ENCODE measurements at regions of chr19 and their contacts with region 1.

Region 1: DNA sequence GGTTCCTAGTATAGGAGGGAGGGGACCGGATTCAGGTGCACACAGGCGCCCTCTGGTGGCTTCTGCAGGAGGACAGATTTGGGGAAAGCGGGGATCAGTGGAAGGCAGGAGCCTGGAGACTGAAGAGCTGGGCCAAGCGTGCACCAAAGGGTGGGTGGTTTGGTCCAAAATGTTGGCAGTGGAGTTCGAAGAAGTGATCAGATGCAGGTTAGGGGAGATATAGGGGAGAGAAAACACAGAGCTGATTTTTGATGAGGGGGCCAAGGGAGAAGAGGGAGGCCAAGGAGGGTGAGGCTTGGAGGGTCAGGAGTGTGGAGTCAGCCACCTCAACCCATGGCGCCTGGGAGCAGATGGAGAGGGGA is 6.8 kb upstream of the CARM1 start:
- DNase-seq: no peak
- H3K4me3 ChIP-seq: no peak overlapping the region
- H3K27me3 ChIP-seq: no peaks in the 10 kb centered on the region
- CTCF ChIP-seq: peak; percentile 96

Region 2: DNA sequence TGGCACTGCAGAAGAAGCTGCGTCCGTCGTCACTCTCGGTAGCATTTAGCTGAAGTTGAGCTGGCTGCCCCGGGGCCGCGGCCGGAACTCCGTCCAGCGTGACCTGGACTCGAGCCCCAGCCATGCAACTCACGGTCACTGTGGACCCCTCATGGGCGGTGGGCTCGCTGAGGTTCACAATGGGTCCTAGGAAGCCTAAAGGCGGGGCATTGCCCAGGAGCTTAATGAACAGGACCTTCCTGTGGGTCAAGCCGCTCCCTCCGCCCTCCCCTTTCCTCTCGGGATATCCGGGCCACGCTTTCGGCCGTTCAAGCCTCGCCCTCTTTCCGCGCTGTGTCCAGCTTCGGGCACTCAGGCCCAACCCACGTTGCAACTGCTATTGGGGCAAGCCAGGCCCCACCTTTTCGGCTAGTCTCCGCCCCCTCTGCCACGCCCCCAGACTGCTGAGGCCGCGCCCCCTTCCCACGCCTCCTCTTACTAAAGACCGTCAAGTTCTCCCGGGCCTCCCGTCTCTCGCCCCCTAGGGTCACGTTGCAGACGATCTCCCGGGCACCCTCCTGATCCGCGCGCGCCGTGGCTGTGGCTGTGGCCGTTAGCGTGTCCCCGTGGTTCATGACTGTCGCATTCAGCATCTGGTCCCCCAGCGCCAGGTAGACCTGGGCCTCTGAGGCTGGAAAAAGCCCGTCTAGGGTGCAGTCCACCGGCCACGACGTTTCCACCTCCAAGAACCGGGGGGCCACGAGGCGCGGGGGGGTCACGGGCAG is 529.7 kb before region 1 on chr19:
- CTCF ChIA-PET with region 1: no interaction called
- POLR2A ChIA-PET with region 1: no interaction called
- DNase-seq: peak; percentile 81
- H3K4me3 ChIP-seq: peak overlapping the region; percentile 97
- H3K27me3 ChIP-seq: no peaks in the 10 kb centered on the region
- CTCF ChIP-seq: peak; percentile 40

Region 3: DNA sequence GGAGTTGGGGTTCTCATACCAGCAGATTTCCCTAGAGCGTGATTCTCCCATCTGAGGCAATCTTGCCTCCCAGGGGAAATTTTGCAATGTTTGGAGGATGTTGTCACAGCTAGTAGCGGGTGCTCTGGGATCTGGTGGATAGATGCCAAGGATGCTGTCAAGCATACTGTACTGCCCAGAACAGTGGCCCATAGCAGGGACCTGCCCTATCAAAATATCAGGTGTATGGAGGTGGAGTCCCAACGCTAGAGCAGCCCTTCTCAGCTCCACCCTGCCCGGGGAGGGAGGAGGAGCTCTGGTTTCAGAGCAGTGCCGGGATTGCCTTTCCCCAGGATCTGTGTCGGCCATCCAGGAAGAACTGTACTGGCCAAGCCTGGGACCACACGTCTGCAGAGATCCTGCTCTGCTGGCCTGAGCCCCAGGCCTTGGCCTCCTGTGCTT is 174.2 kb before region 1 on chr19:
- CTCF ChIA-PET with region 1: no interaction called
- POLR2A ChIA-PET with region 1: no interaction called
- DNase-seq: no peak
- H3K4me3 ChIP-seq: no peak overlapping the region
- H3K27me3 ChIP-seq: no peaks in the 10 kb centered on the region
- CTCF ChIP-seq: no peak

Region 4: GRCh38 chr19:10701955-10702525 is 162.5 kb before region 1 on chr19:
- CTCF ChIA-PET with region 1: interaction called, 14 read pairs
- POLR2A ChIA-PET with region 1: no interaction called
- DNase-seq: no peak
- H3K4me3 ChIP-seq: peak overlapping the region; percentile 96
- H3K27me3 ChIP-seq: no peaks in the 10 kb centered on the region
- CTCF ChIP-seq: no peak

Region 5: DNA sequence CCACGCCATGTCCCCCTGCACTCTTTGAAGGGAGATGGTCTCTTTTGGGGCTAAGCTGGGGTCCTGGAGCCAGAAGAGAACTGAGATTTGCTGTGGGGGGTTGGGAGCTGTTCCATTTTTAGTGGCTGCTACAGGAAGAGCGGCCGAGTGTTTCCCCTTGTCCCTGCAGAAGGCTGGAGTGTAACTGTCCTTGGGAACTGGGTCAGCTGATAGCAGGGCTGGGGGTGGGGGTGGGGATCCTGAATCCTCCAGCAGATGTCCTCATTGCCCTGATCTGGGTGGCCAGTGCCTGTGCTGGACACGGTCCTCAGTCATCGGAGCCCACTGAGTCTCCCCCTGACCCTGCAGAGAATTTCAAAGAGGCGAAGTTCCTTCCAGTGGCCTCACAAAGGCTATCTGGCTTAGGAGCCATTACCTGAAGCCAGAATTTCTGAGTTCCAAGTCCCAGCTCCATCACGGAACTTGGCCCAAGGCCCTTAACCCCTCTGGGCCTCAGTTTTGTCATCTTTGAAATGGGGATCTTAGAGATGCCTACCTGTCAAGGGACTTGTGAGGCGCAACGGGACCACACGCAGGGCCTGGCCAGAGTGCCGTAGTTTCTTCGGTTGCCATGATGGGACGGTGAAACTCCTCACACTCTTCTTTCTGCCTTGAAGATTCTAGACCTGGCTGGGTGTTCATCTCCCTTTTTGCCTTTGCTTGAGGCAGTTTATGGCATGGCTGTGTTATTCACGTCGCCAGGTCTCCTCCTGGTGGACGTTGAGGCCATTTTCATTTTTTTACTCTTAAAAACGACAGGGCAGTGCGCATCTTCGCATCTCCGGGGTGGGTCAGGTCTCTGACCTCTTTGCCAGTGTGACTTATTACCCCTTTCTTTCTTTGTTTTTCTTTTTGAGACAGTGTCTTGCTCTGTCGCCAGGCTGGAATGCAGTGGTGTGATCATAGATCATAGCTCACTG is 94.7 kb before region 1 on chr19:
- CTCF ChIA-PET with region 1: interaction called, 11 read pairs
- POLR2A ChIA-PET with region 1: no interaction called
- DNase-seq: no peak
- H3K4me3 ChIP-seq: no peak overlapping the region
- H3K27me3 ChIP-seq: no peaks in the 10 kb centered on the region
- CTCF ChIP-seq: peak; percentile 32

Region 6: GRCh38 chr19:10846500-10847202 is 17.9 kb before region 1 on chr19:
- CTCF ChIA-PET with region 1: interaction called, 26 read pairs
- POLR2A ChIA-PET with region 1: no interaction called
- DNase-seq: no peak
- H3K4me3 ChIP-seq: no peak overlapping the region
- H3K27me3 ChIP-seq: peaks cover 8% of the 10 kb centered on the region; the same call in 1 of the 2 replicates
- CTCF ChIP-seq: no peak

Region 7: DNA sequence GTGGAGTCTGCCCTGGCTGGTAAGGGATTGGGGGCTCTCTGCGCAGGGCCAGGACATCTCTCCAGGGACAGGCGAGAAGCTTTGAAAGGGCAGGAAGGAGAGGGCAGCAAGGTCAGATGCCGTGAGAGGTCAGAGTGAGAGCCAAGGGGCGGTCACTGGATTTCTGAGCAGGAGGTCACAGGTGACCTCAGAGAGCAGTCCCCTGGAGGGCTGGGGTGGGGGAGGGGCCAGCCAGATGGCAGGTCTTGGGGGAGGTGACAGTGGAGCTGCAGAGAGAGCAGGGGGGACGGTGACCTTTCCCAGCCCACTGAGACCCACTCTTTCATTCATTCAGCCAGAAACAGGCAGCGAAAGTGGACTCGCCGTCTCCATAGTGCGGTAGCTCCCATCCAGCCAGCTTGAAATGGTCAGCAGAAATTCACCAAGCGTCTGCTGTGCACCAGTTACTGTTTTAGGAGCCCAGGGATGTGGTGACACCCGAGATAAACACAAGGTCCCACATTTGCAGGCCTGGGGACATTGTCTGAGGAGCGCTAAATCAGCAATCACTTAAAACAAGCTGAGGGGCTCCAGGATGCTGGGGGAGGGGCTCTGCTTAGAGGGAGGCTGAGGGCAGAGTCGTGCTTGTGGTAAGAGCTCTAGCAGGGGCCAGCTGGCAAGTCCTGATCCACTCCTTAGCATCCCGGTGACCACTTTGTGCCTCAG is 17.0 kb after region 1 on chr19:
- CTCF ChIA-PET with region 1: interaction called, 13 read pairs
- POLR2A ChIA-PET with region 1: no interaction called
- DNase-seq: no peak
- H3K4me3 ChIP-seq: no peak overlapping the region
- H3K27me3 ChIP-seq: no peaks in the 10 kb centered on the region
- CTCF ChIP-seq: no peak

Region 8: DNA sequence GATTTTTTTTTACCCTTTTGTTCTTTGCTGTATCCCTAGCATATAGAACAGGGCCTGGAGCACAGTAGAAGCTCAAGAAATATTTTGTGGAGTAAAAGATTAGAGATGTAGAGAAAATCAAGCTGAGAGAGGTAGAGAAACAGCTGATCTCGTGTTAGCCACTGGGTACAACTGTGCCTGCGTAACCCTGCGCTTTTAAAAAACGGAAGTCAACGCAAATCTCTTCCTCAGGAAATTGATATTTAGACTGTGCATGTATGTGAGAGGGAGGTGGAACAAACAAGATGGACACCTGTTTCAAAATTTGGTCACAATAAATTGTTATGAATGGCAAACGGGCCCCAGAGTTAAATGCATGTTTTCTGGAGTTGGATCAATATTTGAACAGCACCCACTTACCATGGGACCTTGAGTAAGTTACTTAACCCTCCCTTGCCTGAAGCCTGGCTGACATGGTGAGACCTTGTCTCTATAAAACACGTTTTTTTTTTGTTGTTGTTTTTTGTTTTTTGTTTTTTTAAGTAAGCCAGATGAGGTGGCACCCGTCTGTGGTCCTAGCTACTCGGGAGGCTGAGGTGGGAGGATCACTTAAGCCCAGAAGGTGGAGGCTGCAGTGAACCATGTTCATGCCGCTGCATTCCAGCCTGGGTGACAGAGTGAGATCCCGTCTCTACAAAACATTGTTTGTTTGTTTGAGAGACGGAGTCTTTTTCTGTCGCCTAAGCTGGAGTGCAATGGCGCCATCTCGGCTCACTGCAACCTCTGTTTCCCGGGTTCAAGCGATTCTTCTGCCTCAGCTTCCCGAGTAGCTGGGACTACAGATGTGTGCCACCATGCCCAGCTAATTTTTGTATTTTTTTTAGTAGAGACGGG is 522.9 kb after region 1 on chr19:
- CTCF ChIA-PET with region 1: no interaction called
- POLR2A ChIA-PET with region 1: no interaction called
- DNase-seq: no peak
- H3K4me3 ChIP-seq: no peak overlapping the region
- H3K27me3 ChIP-seq: no peaks in the 10 kb centered on the region
- CTCF ChIP-seq: no peak